ENCODE measurements at regions of chr2 and their contacts with region 1.

Region 1: DNA sequence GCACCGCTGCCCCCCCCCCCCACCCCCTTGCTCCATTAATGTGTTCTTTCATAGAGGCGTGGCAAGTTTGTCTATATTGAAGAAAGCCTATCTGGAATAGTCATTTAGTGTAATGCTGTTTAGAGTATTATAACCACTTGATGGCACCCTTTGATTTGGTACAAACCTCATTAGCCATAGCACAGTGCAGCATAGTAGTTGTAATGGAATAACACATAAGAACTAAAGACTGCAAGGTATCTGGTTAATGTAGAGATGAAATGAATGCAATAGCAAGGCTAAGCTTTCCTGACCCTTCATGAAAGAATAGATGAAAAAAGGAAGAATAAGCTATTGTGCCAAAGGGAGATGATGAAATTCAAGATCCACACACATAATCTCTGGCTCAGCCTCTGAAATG is 81.9 kb downstream of the EHBP1 start:
- DNase-seq: no peak
- ATAC-seq: peak; percentile 65
- H3K4me3 Mint-ChIP-seq: no peak overlapping the region
- H3K27ac Mint-ChIP-seq: no peak overlapping the region
- H3K4me1 Mint-ChIP-seq: peaks cover 20% of the 10 kb centered on the region
- H3K27me3 Mint-ChIP-seq: no peaks in the 10 kb centered on the region

Region 2: GRCh38 chr2:62774555-62775366 is 12.6 kb before region 1 on chr2:
- CTCF ChIA-PET with region 1: interaction called, 19 read pairs
- POLR2A ChIA-PET with region 1: no interaction called
- intact Hi-C with region 1: no loop called
- DNase-seq: no peak
- ATAC-seq: no peak
- H3K4me3 Mint-ChIP-seq: no peak overlapping the region
- H3K27ac Mint-ChIP-seq: no peak overlapping the region
- H3K4me1 Mint-ChIP-seq: no peaks in the 10 kb centered on the region
- H3K27me3 Mint-ChIP-seq: no peaks in the 10 kb centered on the region

Region 3: GRCh38 chr2:63023444-63023843 is 236.1 kb after region 1 on chr2:
- CTCF ChIA-PET with region 1: no interaction called
- POLR2A ChIA-PET with region 1: no interaction called
- intact Hi-C with region 1: loop called in 1 of 2 experiments (anchors 1 kb)
- DNase-seq: peak; percentile 13
- ATAC-seq: no peak
- H3K4me3 Mint-ChIP-seq: no peak overlapping the region
- H3K27ac Mint-ChIP-seq: no peak overlapping the region
- H3K4me1 Mint-ChIP-seq: no peaks in the 10 kb centered on the region
- H3K27me3 Mint-ChIP-seq: no peaks in the 10 kb centered on the region

Region 4: GRCh38 chr2:63050334-63051041 is 263.1 kb after region 1 on chr2 and contains the start of gene OTX1:
- CTCF ChIA-PET with region 1: no interaction called
- POLR2A ChIA-PET with region 1: no interaction called
- intact Hi-C with region 1: loop called (anchors 5 to 10 kb)
- DNase-seq: peak; percentile 80
- ATAC-seq: peak; percentile 80
- H3K4me3 Mint-ChIP-seq: peak within 1 kb of the TSS; percentile 75
- H3K27ac Mint-ChIP-seq: peak within 1 kb of the TSS; percentile 47
- H3K4me1 Mint-ChIP-seq: peaks cover 60% of the 10 kb centered on the region
- H3K27me3 Mint-ChIP-seq: peaks cover 78% of the 10 kb centered on the region
- total RNA-seq, gene OTX1: not detected

Region 5: GRCh38 chr2:63078852-63079606 is 291.6 kb after region 1 on chr2:
- CTCF ChIA-PET with region 1: no interaction called
- POLR2A ChIA-PET with region 1: no interaction called
- intact Hi-C with region 1: no loop called
- DNase-seq: peak; percentile 35
- ATAC-seq: no peak
- H3K4me3 Mint-ChIP-seq: no peak overlapping the region
- H3K27ac Mint-ChIP-seq: no peak overlapping the region
- H3K4me1 Mint-ChIP-seq: no peaks in the 10 kb centered on the region
- H3K27me3 Mint-ChIP-seq: peaks cover 27% of the 10 kb centered on the region

Region 6: DNA sequence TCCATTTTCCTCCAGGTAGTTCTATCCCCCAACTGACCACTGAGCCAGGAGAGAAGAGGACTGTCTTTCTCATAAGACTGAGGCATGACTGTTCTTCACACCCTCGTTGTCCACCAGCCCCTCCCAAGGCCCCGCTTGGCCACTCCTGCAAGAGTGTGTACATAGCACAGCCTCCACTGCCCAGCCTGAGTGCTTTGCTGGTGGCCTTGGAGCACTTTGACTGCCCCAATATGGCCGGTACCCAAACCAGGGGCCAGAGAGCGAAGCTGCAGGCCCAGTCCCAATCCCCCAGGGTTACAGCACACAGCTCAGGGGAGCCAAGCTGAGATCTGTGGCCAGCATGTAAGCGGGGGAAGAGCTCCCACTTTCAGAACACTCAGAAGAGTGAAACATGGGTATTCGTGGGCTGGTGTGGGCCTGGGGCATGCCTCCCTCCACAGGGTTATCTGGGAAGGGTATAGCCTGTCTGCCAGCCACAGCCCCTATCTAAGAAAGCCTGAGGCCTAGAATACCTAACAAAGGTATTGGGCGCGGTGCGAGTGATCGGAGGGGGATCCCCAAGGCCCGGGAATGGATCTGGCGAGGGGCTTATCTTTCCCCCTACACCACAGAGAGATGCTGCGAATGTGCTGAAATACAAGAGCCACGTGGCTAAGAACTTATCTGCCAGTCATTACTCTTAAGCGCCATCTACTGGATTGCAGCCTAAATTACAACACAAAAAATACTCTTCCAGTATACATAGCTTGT is 637.1 kb after region 1 on chr2:
- CTCF ChIA-PET with region 1: no interaction called
- POLR2A ChIA-PET with region 1: no interaction called
- intact Hi-C with region 1: loop called (anchors 1 to 10 kb)
- DNase-seq: peak; percentile 16
- ATAC-seq: peak; percentile 76
- H3K4me3 Mint-ChIP-seq: no peak overlapping the region
- H3K27ac Mint-ChIP-seq: no peak overlapping the region
- H3K4me1 Mint-ChIP-seq: peaks cover 3% of the 10 kb centered on the region
- H3K27me3 Mint-ChIP-seq: no peaks in the 10 kb centered on the region

Region 7: GRCh38 chr2:63488118-63488713 is 700.8 kb after region 1 on chr2:
- CTCF ChIA-PET with region 1: no interaction called
- POLR2A ChIA-PET with region 1: no interaction called
- intact Hi-C with region 1: loop called in 1 of 2 experiments (anchors 5 kb)
- DNase-seq: peak; percentile 39
- ATAC-seq: no peak
- H3K4me3 Mint-ChIP-seq: no peak overlapping the region
- H3K27ac Mint-ChIP-seq: no peak overlapping the region
- H3K4me1 Mint-ChIP-seq: no peaks in the 10 kb centered on the region
- H3K27me3 Mint-ChIP-seq: no peaks in the 10 kb centered on the region

Measured in activated CD4-positive, alpha-beta T cell treated with anti-CD3 and anti-CD28 coated beads for 36 hours (primary cell).